Adrenal gland (tissue), 19 donors: ENCODE measurements at regions of chrX and their contacts with region 1.

Region 1: GRCh38 chrX:87664381-87664780 is 146.8 kb downstream of the KLHL4 start:
- DNase-seq: no peak
- H3K4me3 ChIP-seq: no peak overlapping the region
- H3K27ac ChIP-seq: no peak overlapping the region
- H3K4me1 ChIP-seq: no peaks in the 10 kb centered on the region
- H3K27me3 ChIP-seq: no peaks in the 10 kb centered on the region
- CTCF ChIP-seq: peak; percentile 38 to 65 (median 55)
- POLR2A ChIP-seq: no peak

Region 2: DNA sequence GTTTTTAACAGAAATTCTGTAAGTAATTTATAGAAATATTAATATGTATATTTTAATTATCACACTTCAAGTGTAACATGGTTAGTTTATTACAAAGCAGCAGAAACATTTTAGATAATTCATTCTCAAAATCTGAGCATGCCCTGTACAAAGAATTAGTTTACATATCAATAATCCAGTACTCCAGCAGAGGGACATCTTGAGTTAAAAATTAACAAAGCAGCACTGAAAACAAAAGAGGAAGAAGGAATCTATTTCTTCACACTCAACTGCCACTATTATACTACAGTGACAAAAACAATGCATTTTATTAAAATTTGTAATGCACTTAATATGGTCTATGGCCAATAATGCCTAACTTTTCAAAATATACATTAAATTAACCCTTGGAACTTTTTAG is 325.9 kb before region 1 on chrX:
- intact Hi-C with region 1: loop called in 1 of 2 experiments (anchors 10 kb)
- DNase-seq: no peak
- H3K4me3 ChIP-seq: no peak overlapping the region
- H3K27ac ChIP-seq: no peak overlapping the region
- H3K4me1 ChIP-seq: no peaks in the 10 kb centered on the region
- H3K27me3 ChIP-seq: peaks cover 14% of the 10 kb centered on the region
- CTCF ChIP-seq: peak; percentile 26 to 55 (median 50)
- POLR2A ChIP-seq: no peak

Region 3: DNA sequence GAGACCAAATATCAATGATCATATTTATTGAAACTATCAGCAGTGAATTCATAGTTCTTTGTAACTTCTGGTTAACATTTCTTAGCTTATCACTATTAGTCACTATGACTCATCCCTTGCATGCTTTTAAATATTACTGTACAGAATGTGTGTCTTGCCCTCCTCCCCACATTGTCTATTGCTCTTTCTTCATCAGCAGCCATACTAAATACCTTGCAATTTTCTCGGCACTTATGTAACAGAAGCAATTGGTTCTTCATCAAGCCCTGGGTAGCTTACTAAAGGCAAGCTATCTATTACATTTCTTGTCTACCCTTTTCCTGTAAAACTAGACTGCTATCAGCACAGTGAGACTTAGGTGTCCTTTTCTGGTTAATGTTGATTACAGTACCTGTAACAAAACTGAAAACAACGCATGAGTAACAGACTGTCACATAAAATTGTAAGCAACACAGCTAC is 138.6 kb before region 1 on chrX:
- intact Hi-C with region 1: loop called in 1 of 2 experiments (anchors 10 kb)
- DNase-seq: no peak
- H3K4me3 ChIP-seq: no peak overlapping the region
- H3K27ac ChIP-seq: peak overlapping the region in 1 of 5 donors; percentile 4
- H3K4me1 ChIP-seq: no peaks in the 10 kb centered on the region
- H3K27me3 ChIP-seq: no peaks in the 10 kb centered on the region
- CTCF ChIP-seq: no peak
- POLR2A ChIP-seq: no peak